ENCODE measurements at regions of chr12 and their contacts with region 1.

Region 1: GRCh38 chr12:118773956-118774723 is 207.2 kb upstream of the SRRM4 start:
- DNase-seq: no peak
- H3K4me3 ChIP-seq: no peak overlapping the region
- H3K27ac ChIP-seq: no peak overlapping the region
- H3K4me1 ChIP-seq: no peaks in the 10 kb centered on the region
- H3K27me3 ChIP-seq: peaks cover 17% of the 10 kb centered on the region
- CTCF ChIP-seq: no peak
- EP300 ChIP-seq: no peak
- POLR2A ChIP-seq: no peak

Region 2: GRCh38 chr12:118680356-118680963 is 93.7 kb before region 1 on chr12:
- in situ Hi-C with region 1: no loop called
- intact Hi-C with region 1: no loop called
- DNase-seq: peak; percentile 50
- H3K4me3 ChIP-seq: no peak overlapping the region
- H3K27ac ChIP-seq: no peak overlapping the region
- H3K4me1 ChIP-seq: peaks cover 0 to 1% (median under 1%) of the 10 kb centered on the region in 4 donors
- H3K27me3 ChIP-seq: peaks cover 4% of the 10 kb centered on the region
- CTCF ChIP-seq: peak in 1 of 5 experiments; percentile 6
- EP300 ChIP-seq: no peak
- POLR2A ChIP-seq: no peak

Region 3: DNA sequence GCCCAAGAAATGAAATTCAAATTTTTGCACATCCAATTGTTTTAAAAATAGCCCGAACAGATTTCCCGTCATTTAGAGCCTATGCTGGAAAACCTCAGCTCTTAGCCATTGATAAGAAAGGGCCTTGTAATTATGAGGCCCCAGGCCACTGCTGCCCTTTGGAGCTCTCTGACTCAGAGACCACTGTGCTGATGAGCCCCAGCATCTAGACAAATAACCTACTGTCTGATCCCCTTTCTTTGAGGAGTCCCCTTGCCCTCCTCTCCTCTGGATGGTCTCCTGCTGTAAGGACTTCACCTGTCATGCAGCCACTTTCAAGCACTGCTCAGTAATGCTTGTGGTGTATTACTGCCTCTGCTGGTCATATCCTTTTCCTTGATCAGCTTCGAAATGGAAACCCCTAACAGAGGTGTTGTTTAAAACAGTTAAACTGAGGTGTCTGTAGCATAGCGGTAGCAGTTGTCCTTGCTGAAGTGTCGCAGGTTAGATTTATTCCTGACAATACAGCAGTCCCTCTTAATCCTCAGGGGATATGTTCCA is 47.3 kb after region 1 on chr12:
- in situ Hi-C with region 1: no loop called
- intact Hi-C with region 1: loop called (anchors 2 kb)
- DNase-seq: no peak
- H3K4me3 ChIP-seq: no peak overlapping the region
- H3K27ac ChIP-seq: no peak overlapping the region
- H3K4me1 ChIP-seq: no peaks in the 10 kb centered on the region
- H3K27me3 ChIP-seq: no peaks in the 10 kb centered on the region
- CTCF ChIP-seq: no peak
- EP300 ChIP-seq: no peak
- POLR2A ChIP-seq: no peak

Region 4: GRCh38 chr12:119491814-119492213 is 717.7 kb after region 1 on chr12:
- in situ Hi-C with region 1: no loop called
- intact Hi-C with region 1: no loop called
- DNase-seq: no peak
- H3K4me3 ChIP-seq: no peak overlapping the region
- H3K27ac ChIP-seq: no peak overlapping the region
- H3K4me1 ChIP-seq: no peaks in the 10 kb centered on the region
- H3K27me3 ChIP-seq: peaks cover 3% of the 10 kb centered on the region
- CTCF ChIP-seq: no peak
- EP300 ChIP-seq: no peak
- POLR2A ChIP-seq: no peak